ENCODE measurements at regions of chr3 and their contacts with region 1.

Region 1: GRCh38 chr3:33074217-33075067 is 22.5 kb downstream of the GLB1 start:
- DNase-seq: peak; percentile 82
- ATAC-seq: peak; percentile 87
- H3K4me3 Mint-ChIP-seq: no peak overlapping the region
- H3K27ac Mint-ChIP-seq: no peak overlapping the region
- H3K4me1 Mint-ChIP-seq: peaks cover 24% of the 10 kb centered on the region
- H3K27me3 Mint-ChIP-seq: no peaks in the 10 kb centered on the region

Region 2: GRCh38 chr3:32947789-32948238 is 126.6 kb before region 1 on chr3:
- CTCF ChIA-PET with region 1: interaction called, 158 read pairs
- POLR2A ChIA-PET with region 1: interaction called, 3 read pairs
- DNase-seq: peak; percentile 94
- ATAC-seq: peak; percentile 90
- H3K4me3 Mint-ChIP-seq: no peak overlapping the region
- H3K27ac Mint-ChIP-seq: no peak overlapping the region
- H3K4me1 Mint-ChIP-seq: peaks cover 35% of the 10 kb centered on the region
- H3K27me3 Mint-ChIP-seq: peaks cover 3% of the 10 kb centered on the region

Region 3: GRCh38 chr3:32973982-32974381 is 100.5 kb before region 1 on chr3:
- CTCF ChIA-PET with region 1: interaction called, 13 read pairs
- POLR2A ChIA-PET with region 1: no interaction called
- DNase-seq: peak; percentile 76
- ATAC-seq: peak; percentile 98
- H3K4me3 Mint-ChIP-seq: no peak overlapping the region
- H3K27ac Mint-ChIP-seq: peak overlapping the region; percentile 47
- H3K4me1 Mint-ChIP-seq: peaks cover 35% of the 10 kb centered on the region
- H3K27me3 Mint-ChIP-seq: peaks cover 5% of the 10 kb centered on the region

Region 4: DNA sequence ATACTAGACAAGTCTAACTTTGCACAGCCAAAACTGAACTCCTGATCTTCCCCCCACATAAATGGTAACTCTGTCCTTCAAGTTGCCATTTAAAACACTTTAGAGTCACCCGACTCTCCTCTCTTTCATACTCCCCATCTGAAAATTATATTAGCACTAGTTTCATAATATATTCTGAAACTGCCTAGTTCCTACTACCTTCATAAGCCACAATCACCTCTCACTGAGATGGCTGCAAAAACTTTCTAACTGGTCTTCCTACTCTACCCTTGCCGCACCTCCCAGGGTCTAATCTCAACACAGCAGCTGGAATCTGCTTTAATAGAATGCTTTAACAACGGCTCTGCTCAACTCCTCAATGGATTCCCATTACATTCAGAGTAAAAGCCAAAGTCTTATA is 32.5 kb before region 1 on chr3:
- CTCF ChIA-PET with region 1: interaction called, 39 read pairs
- POLR2A ChIA-PET with region 1: no interaction called
- DNase-seq: no peak
- ATAC-seq: no peak
- H3K4me3 Mint-ChIP-seq: no peak overlapping the region
- H3K27ac Mint-ChIP-seq: no peak overlapping the region
- H3K4me1 Mint-ChIP-seq: peaks cover 48% of the 10 kb centered on the region
- H3K27me3 Mint-ChIP-seq: no peaks in the 10 kb centered on the region

Region 5: DNA sequence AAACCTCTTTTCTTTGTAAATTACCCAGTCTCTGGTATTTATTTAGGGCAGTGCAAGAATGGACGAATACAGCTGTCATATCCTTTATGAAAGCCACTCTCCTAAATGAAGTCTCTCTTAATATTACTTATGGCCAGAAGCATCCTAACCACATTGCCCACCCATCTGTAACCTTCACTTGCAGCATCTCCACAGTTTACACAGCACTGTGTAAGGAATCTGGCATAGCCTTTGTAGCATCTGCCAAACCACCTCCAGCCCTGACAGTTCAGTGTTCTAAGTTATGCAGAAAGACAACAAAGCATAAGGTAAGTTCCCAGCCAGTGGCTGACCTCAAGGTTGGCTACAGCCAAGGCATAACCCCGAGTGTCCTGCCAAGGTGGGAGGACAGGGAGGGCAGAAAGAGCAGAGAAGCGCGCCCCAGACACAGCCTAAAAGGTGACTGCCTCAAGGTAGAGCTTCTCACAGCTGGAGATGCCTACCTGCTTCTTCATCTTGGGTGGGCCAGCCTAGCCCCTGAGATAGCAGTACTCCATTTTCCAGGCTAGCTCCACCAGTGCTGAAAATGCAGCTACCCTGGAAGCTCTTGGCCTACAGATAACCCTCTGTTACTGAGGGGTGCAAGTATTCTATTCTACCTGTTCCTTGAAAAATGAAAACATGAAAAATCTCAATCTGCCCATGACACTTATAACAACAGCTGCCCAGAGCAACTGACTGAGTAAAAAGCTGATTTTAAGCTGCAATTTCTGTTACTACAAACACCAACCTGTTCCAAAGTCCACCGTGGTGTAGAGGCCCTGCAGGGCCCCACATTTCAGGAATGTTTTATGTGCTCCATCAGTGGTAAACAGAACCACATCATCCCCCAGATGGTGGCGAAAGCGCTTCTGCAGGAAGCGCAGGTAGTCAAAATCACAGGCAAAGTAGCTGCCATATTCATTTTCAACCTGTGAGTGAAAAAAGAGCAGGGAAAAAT is 16.8 kb before region 1 on chr3:
- CTCF ChIA-PET with region 1: interaction called, 58 read pairs
- POLR2A ChIA-PET with region 1: no interaction called
- DNase-seq: no peak
- ATAC-seq: no peak
- H3K4me3 Mint-ChIP-seq: no peak overlapping the region
- H3K27ac Mint-ChIP-seq: peak overlapping the region; percentile 9
- H3K4me1 Mint-ChIP-seq: peaks cover 89% of the 10 kb centered on the region
- H3K27me3 Mint-ChIP-seq: no peaks in the 10 kb centered on the region

Region 6: GRCh38 chr3:33089515-33089914 is 15.1 kb after region 1 on chr3:
- CTCF ChIA-PET with region 1: interaction called, 31 read pairs
- POLR2A ChIA-PET with region 1: no interaction called
- DNase-seq: peak; percentile 54
- ATAC-seq: peak; percentile 78
- H3K4me3 Mint-ChIP-seq: peak overlapping the region; percentile 55
- H3K27ac Mint-ChIP-seq: peak overlapping the region; percentile 70
- H3K4me1 Mint-ChIP-seq: peaks cover 68% of the 10 kb centered on the region
- H3K27me3 Mint-ChIP-seq: no peaks in the 10 kb centered on the region